Right ventricle myocardium inferior (tissue), 1 donor: ENCODE measurements at regions of chr5 and their contacts with region 1.

Region 1: GRCh38 chr5:179623003-179623880 is at the start of gene HNRNPH1:
- DNase-seq: peak; percentile 98
- ATAC-seq: peak; percentile 91
- total RNA-seq, gene HNRNPH1: 218 TPM

Region 2: DNA sequence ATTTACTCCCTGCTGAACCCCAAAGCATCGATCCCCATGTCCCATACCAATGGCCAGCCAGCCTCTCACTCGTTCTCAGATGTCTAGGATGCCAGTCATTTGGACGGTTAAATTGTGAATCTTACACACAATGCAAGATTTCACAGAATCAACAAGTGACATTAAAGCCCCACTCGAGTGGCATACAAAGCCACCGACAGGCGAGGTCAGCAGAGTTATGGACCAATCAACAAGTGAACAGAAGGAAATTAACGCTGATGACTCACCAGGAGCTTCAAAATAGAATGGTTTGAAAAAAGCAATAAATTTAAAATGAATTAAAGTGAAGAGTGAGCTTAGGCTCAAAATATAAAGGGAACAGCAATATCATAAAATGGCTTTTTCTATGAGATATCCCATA is 81.1 kb before region 1 on chr5:
- intact Hi-C with region 1: no loop called
- DNase-seq: no peak
- ATAC-seq: no peak

Region 3: GRCh38 chr5:179559284-179560252 is 63.7 kb before region 1 on chr5:
- intact Hi-C with region 1: loop called (anchors 5 kb)
- DNase-seq: peak; percentile 99
- ATAC-seq: peak; percentile 100